Natural killer cell (primary cell): ENCODE measurements at regions of chr6 and their contacts with region 1.

Region 1: GRCh38 chr6:42928986-42929820 is at the start of gene CNPY3:
- DNase-seq: peak; percentile 91 to 97
- ATAC-seq: peak; percentile 77 to 91 (median 86)
- H3K4me3 ChIP-seq: peak within 1 kb of the TSS; percentile 76
- H3K4me3 Mint-ChIP-seq: peak within 1 kb of the TSS; percentile 97
- H3K27ac ChIP-seq: peak within 1 kb of the TSS; percentile 98
- H3K27ac Mint-ChIP-seq: peak within 1 kb of the TSS; percentile 94 to 98
- H3K4me1 ChIP-seq: peaks cover 47% of the 10 kb centered on the region
- H3K4me1 Mint-ChIP-seq: peaks cover 48 to 58% of the 10 kb centered on the region in 2 donors
- H3K27me3 ChIP-seq: no peaks in the 10 kb centered on the region
- H3K27me3 Mint-ChIP-seq: no peaks in the 10 kb centered on the region
- CTCF ChIP-seq: no peak
- total RNA-seq, gene CNPY3: 52.4 to 71.2 (median 59.8) TPM

Region 2: DNA sequence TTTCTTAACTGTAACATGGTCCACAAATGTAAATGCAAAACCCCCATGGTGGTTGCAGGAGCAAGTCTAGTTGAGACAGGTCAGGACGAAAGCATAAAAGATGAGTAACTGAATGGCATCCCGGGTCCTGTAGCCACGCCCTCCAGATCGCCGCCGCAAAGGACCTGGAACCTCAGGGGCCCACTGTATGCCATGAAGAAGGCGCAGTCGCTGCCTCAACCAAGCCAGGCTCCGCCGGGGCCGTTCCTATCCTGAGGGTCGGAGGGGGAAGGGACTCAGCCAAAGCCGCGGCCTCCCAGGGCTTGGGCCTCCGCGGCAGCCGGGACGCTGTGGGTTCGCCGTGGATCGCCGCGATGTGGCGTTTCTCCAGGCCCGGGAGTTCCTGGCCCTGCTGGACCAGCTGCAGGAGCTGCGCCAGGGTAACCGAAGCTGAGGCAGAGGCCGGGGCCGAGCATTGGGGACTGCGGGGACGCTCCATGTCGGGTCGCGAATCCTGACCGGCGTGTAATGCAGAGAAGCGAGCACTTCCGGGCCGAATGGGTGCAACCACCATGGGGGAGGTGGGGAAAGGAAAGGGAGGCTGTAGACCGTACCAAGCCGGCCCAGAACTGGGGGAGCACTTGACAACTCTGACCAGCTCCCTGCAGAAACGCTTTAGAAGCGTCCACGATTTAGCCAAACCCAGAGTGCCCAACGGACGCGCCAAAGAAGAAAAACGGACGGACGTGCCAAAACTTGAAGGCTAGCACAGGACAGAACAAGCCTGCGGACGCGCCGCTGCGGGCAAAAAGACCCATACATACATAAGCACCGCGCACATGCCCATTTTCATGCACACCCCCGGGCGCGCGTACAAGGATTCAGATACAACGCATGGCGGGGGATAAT is 38.6 kb before region 1 on chr6:
- intact Hi-C with region 1: no loop called
- DNase-seq: peak; percentile 82 to 93
- ATAC-seq: peak; percentile 97 to 99 (median 98)
- H3K4me3 ChIP-seq: peak overlapping the region; percentile 98
- H3K4me3 Mint-ChIP-seq: peak overlapping the region; percentile 97
- H3K27ac ChIP-seq: peak overlapping the region; percentile 89
- H3K27ac Mint-ChIP-seq: peak overlapping the region; percentile 91 to 97
- H3K4me1 ChIP-seq: peaks cover 13% of the 10 kb centered on the region
- H3K4me1 Mint-ChIP-seq: peaks cover 7 to 8% of the 10 kb centered on the region in 2 donors
- H3K27me3 ChIP-seq: no peaks in the 10 kb centered on the region
- H3K27me3 Mint-ChIP-seq: no peaks in the 10 kb centered on the region
- CTCF ChIP-seq: no peak

Region 3: DNA sequence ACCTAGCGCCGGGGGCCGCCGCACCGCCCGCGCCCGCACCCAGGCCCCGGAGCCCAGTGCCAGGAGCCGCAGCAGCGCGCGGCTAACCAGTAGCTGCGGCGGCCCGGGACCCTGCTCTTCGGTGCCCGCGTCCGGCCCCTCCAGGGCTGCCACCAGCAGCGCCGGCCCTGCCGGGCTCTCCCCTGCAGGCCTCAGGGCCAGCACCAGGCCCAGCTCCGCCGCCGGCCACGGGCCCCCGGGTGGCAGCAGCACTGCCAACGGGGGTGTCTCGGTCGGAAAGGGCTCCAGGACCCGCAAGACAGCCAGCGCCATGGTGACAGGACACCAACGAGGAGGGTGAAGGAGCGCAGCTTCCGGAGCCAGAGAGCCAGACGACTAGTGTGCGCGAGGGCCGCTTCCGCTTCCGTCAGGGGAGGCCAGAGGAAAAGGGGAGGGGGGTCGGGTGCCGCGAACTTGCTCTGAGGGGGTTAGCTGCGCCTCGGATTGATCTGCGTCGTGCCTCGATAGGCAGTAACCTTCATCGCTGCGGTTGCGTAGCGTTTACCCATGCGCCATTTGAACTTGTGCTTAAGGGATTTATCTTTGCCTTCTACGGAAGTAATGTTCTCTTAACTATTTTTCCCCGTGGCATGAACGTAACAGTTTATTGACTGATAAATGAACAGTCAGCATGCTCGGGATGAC is 49.8 kb after region 1 on chr6 and contains the start of gene PEX6:
- intact Hi-C with region 1: loop called (anchors 1 kb)
- DNase-seq: peak; percentile 78 to 98
- ATAC-seq: peak; percentile 89 to 97 (median 94)
- H3K4me3 ChIP-seq: peak within 1 kb of the TSS; percentile 69
- H3K4me3 Mint-ChIP-seq: peak within 1 kb of the TSS; percentile 94
- H3K27ac ChIP-seq: peak within 1 kb of the TSS; percentile 81
- H3K27ac Mint-ChIP-seq: peak within 1 kb of the TSS; percentile 95 to 98
- H3K4me1 ChIP-seq: peaks cover 32% of the 10 kb centered on the region
- H3K4me1 Mint-ChIP-seq: peaks cover 29 to 31% of the 10 kb centered on the region in 2 donors
- H3K27me3 ChIP-seq: no peaks in the 10 kb centered on the region
- H3K27me3 Mint-ChIP-seq: no peaks in the 10 kb centered on the region
- CTCF ChIP-seq: no peak
- total RNA-seq, gene PEX6: 8.2 to 13.6 (median 9.9) TPM

Region 4: DNA sequence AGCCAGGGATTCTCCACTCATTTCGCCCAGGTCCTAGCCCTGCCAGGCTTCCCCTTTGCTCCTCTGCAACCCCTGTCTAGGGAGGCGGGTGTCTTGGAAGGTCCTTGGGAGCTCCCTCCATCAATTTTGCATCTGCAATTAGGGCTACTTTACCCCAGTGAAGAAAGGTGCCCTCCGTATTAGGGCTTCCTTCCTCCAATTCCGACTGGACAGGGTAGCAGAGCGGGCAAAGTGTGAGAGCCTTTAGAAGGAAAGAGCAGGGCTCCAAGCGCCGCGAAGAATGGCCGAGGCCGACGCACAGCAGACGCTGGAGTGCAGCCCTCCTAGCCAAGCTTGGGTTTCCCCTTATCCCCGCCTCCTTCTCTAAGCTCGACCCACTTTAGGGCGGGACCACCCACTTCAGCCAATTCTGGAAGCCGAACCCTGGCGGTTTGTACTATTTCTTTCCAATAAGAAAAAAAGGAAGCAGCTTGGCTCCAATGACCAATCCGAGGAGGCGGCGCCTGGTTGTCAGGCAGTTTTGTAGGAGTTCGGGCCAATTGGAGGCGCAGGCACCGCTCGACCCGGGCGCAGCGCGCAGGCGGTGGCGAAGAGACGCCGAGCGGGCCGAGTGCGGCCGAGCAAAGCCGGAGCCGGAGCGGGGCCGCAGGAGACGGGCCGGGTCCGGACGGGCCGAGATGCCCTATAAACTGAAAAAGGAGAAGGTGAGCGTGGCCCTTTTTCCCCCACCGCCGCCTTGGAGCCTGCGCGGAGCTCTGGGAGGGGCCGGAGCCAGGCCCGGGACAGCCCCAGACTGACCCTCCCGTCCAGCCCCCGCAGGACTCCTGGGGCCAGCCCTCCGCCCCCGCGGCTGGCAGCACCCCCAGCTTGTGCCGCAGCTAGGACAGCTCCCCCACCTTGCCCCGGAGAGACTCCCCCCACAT is 55.1 kb after region 1 on chr6 and contains the start of gene PPP2R5D:
- intact Hi-C with region 1: loop called (anchors 1 kb)
- DNase-seq: peak; percentile 94 to 98
- ATAC-seq: peak; percentile 91 to 98 (median 93)
- H3K4me3 ChIP-seq: peak within 1 kb of the TSS; percentile 75
- H3K4me3 Mint-ChIP-seq: peak within 1 kb of the TSS; percentile 95
- H3K27ac ChIP-seq: peak within 1 kb of the TSS; percentile 76
- H3K27ac Mint-ChIP-seq: peak within 1 kb of the TSS; percentile 94 to 95
- H3K4me1 ChIP-seq: peaks cover 36% of the 10 kb centered on the region
- H3K4me1 Mint-ChIP-seq: peaks cover 48 to 52% of the 10 kb centered on the region in 2 donors
- H3K27me3 ChIP-seq: no peaks in the 10 kb centered on the region
- H3K27me3 Mint-ChIP-seq: no peaks in the 10 kb centered on the region
- CTCF ChIP-seq: no peak
- total RNA-seq, gene PPP2R5D: 30.5 to 49.1 (median 40.1) TPM

Region 5: GRCh38 chr6:43013843-43014433 is 84.7 kb after region 1 on chr6 and contains the starts of genes KLHDC3 and MEA1:
- intact Hi-C with region 1: loop called (anchors 1 kb)
- DNase-seq: peak; percentile 86 to 99
- ATAC-seq: peak; percentile 90 to 97 (median 90)
- H3K4me3 ChIP-seq: peak within 1 kb of the TSS; percentile 78
- H3K4me3 Mint-ChIP-seq: peak within 1 kb of the TSS; percentile 97
- H3K27ac ChIP-seq: peak within 1 kb of the TSS; percentile 56
- H3K27ac Mint-ChIP-seq: peak within 1 kb of the TSS; percentile 87 to 93
- H3K4me1 ChIP-seq: peaks cover 40% of the 10 kb centered on the region
- H3K4me1 Mint-ChIP-seq: peaks cover 38 to 59% of the 10 kb centered on the region in 2 donors
- H3K27me3 ChIP-seq: no peaks in the 10 kb centered on the region
- H3K27me3 Mint-ChIP-seq: no peaks in the 10 kb centered on the region
- CTCF ChIP-seq: no peak
- total RNA-seq, gene KLHDC3: 52.7 to 60.9 (median 53.7) TPM
- total RNA-seq, gene MEA1: 29.6 to 34.3 (median 34.2) TPM

Region 6: DNA sequence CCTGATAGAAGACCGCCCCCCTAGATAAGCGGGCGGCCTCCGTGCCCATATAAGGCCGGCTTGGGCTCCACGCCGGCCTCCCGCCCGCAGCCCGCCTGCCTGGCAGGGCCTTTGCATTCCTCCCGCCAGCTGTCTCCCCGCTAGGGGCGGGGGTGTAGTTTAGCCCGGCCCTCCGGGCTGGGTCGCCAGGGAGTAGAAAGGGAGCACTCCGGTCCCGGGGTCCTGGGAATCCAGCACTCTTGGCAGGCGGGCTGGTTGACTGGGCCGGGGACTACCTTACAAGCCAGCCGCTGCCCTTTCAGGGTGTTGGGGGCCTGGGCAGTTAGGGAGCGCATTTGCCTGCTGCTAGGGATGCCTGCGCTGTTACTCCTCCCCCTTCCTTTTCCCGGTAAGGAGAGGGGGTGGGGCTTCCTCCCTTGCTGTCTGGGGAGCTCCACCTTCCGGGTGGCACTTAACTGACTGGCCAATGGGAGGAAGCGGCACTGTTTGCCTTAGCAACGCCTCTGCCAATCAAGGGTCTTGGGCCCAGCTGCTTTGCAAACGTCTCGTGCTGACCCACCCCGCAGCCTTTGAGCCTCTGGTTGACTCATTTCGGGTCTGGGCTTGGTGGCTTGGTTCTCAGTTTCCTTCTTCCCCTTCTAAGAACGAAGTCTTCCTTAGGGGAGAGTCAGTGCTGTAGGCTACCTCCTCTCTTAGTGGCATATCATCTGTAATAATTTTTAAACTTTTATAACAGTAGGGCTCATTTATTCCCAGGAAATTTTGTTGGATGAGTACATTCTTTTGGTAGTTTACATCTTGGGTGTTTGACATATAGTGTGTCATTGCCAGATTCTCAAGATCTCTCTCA is 245.3 kb after region 1 on chr6:
- intact Hi-C with region 1: loop called (anchors 1 kb)
- DNase-seq: peak; percentile 83 to 97
- ATAC-seq: peak; percentile 61 to 74 (median 67)
- H3K4me3 ChIP-seq: peak overlapping the region; percentile 6
- H3K4me3 Mint-ChIP-seq: peak overlapping the region; percentile 64
- H3K27ac ChIP-seq: peak overlapping the region; percentile 83
- H3K27ac Mint-ChIP-seq: peak overlapping the region; percentile 94 to 96
- H3K4me1 ChIP-seq: peaks cover 50% of the 10 kb centered on the region
- H3K4me1 Mint-ChIP-seq: peaks cover 33 to 52% of the 10 kb centered on the region in 2 donors
- H3K27me3 ChIP-seq: no peaks in the 10 kb centered on the region
- H3K27me3 Mint-ChIP-seq: no peaks in the 10 kb centered on the region
- CTCF ChIP-seq: no peak